MCF 10A (cell line): ENCODE measurements at regions of chr7 and their contacts with region 1.

Region 1: GRCh38 chr7:147984265-147984664 is 606.3 kb upstream of the C7orf33 start:
- DNase-seq: no peak
- H3K4me3 Mint-ChIP-seq: no peak overlapping the region
- H3K27ac Mint-ChIP-seq: no peak overlapping the region
- H3K4me1 Mint-ChIP-seq: no peaks in the 10 kb centered on the region
- H3K27me3 Mint-ChIP-seq: no peaks in the 10 kb centered on the region
- CTCF ChIP-seq: no peak

Region 2: DNA sequence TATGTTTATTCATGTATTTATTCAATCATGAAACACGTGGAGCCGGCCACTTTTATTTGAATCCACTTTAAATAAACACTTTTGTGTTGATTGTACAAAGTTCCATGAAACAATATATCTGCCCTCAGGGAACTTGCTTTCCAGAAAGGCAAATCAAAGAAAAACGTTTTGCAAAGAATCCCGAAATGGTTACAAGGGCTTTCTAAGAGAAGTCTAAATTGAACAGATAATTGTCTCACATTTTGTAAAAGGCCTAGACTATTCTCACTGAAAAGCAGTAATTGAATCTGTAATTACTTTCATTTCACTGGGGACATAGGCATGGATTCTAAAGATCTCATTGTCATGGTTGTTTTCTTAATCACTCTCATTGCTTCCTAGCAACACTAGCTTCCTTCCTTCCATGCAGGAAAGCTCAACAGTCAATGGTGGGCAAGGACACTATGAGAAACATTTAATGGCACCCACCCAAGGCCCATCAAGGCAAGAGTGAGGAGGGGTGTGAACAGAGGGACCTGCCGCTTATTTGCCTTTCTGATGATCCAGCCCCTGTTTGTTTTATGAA is 16.1 kb before region 1 on chr7:
- CTCF ChIA-PET with region 1: no interaction called
- POLR2A ChIA-PET with region 1: no interaction called
- intact Hi-C with region 1: loop called (anchors 1 kb)
- DNase-seq: no peak
- H3K4me3 Mint-ChIP-seq: no peak overlapping the region
- H3K27ac Mint-ChIP-seq: no peak overlapping the region
- H3K4me1 Mint-ChIP-seq: no peaks in the 10 kb centered on the region
- H3K27me3 Mint-ChIP-seq: peaks cover 7% of the 10 kb centered on the region
- CTCF ChIP-seq: no peak